T-cell (primary cell): ENCODE measurements at regions of chr4 and their contacts with region 1.

Region 1: GRCh38 chr4:148944136-148944838 is 502.1 kb upstream of the NR3C2 start:
- DNase-seq: no peak
- ATAC-seq: no peak
- H3K4me3 ChIP-seq: no peak overlapping the region
- H3K4me3 Mint-ChIP-seq: no peak overlapping the region
- H3K27ac ChIP-seq: no peak overlapping the region
- H3K27ac Mint-ChIP-seq: no peak overlapping the region
- H3K4me1 ChIP-seq: no peaks in the 10 kb centered on the region
- H3K4me1 Mint-ChIP-seq: no peaks in the 10 kb centered on the region
- H3K27me3 ChIP-seq: no peaks in the 10 kb centered on the region
- H3K27me3 Mint-ChIP-seq: peaks cover 0 to 4% of the 10 kb centered on the region in 2 donors

Region 2: DNA sequence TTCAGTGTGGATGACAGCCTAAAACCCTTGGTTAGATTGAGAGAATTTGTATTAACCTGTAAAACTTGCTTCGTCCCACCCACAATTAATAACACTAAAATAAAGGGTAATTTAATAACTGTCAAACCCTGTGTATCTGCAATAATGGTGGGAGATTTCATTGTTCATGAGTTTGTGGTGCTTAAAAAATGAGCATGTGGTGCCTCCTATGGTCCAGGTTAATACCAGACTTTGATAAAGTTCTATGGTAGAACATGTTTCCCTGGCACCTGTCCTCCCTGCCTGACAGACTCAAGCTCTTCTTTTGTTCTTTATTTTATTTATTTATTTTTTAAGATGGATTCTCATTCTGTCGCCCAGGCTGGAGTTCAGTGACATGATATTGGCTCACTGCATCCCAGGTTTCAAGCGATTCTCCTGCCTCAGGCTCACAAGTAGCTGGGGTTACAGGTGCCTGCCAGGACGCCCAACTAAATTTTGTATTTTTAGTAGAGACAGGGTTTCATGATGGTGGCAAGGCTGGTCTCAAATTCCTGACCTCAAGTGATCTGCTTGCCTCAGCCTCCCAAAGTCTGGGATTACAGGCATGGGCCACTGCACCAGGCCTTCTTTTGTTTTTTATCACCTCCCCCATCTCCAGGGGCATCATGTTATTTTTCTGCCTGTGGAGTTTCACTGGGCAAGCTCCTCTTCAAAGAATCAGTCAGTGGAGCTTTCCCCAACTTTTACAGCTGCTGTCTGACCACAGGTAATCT is 791.2 kb before region 1 on chr4:
- CTCF ChIA-PET with region 1: interaction called in 1 of 2 experiments, 11 read pairs
- POLR2A ChIA-PET with region 1: no interaction called
- DNase-seq: peak in 1 of 35 experiments; percentile 11
- ATAC-seq: no peak
- H3K4me3 ChIP-seq: no peak overlapping the region
- H3K4me3 Mint-ChIP-seq: no peak overlapping the region
- H3K27ac ChIP-seq: no peak overlapping the region
- H3K27ac Mint-ChIP-seq: no peak overlapping the region
- H3K4me1 ChIP-seq: no peaks in the 10 kb centered on the region
- H3K4me1 Mint-ChIP-seq: peaks cover 0 to 5% (median 0%) of the 10 kb centered on the region in 3 donors
- H3K27me3 ChIP-seq: no peaks in the 10 kb centered on the region
- H3K27me3 Mint-ChIP-seq: no peaks in the 10 kb centered on the region

Region 3: DNA sequence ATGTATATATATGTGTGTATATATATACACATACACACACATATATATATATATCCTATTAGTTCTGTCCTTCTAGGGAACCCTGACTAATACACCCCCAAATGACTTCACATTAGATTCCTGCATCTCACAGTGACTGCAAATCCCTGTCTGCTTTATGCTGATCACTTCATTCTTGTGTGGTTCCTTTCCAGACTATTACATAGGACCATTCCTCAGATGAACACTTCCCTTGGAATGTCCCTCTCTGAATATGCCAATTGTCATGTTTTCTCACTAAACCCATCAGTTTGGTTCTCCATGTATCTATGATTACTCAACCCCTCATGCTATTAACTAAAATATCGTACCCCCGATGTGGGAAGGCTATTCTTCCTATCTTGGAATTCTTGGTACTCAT is 103.1 kb after region 1 on chr4:
- CTCF ChIA-PET with region 1: no interaction called
- POLR2A ChIA-PET with region 1: no interaction called
- DNase-seq: no peak
- ATAC-seq: no peak
- H3K4me3 ChIP-seq: no peak overlapping the region
- H3K4me3 Mint-ChIP-seq: no peak overlapping the region
- H3K27ac ChIP-seq: no peak overlapping the region
- H3K27ac Mint-ChIP-seq: no peak overlapping the region
- H3K4me1 ChIP-seq: no peaks in the 10 kb centered on the region
- H3K4me1 Mint-ChIP-seq: no peaks in the 10 kb centered on the region
- H3K27me3 ChIP-seq: no peaks in the 10 kb centered on the region
- H3K27me3 Mint-ChIP-seq: peaks cover 0 to 3% of the 10 kb centered on the region in 2 donors